ENCODE measurements at regions of chr3 and their contacts with region 1.

Region 1: GRCh38 chr3:136444581-136444980 is 194.4 kb downstream of the PCCB start:
- DNase-seq: no peak
- H3K4me3 ChIP-seq: no peak overlapping the region
- H3K27ac ChIP-seq: no peak overlapping the region
- H3K4me1 ChIP-seq: no peaks in the 10 kb centered on the region
- H3K27me3 ChIP-seq: no peaks in the 10 kb centered on the region
- CTCF ChIP-seq: no peak
- POLR2A ChIP-seq: no peak

Region 2: GRCh38 chr3:136378011-136378410 is 66.6 kb before region 1 on chr3:
- intact Hi-C with region 1: loop called (anchors 2 kb)
- DNase-seq: no peak
- H3K4me3 ChIP-seq: no peak overlapping the region
- H3K27ac ChIP-seq: no peak overlapping the region
- H3K4me1 ChIP-seq: no peaks in the 10 kb centered on the region
- H3K27me3 ChIP-seq: no peaks in the 10 kb centered on the region
- CTCF ChIP-seq: no peak
- POLR2A ChIP-seq: no peak

Region 3: DNA sequence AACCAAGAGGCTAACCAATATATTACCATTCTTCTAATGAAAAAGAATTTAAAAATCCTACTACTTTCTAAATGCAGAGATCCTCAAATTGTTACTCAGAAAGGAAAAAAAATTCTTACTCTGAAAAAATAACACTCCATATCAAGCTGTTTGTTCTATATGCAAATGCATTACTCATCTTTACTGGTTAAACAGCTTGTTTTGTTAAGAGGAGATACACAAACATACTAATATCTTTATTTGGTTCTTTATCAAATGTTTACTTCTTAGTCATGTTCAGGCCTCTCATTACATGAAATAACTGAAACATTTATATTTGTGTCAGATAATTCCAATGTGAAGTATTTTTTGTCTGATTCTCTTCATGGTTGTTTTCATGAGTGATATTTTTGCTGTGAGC is 47.7 kb before region 1 on chr3:
- intact Hi-C with region 1: no loop called
- DNase-seq: no peak
- H3K4me3 ChIP-seq: no peak overlapping the region
- H3K27ac ChIP-seq: no peak overlapping the region
- H3K4me1 ChIP-seq: no peaks in the 10 kb centered on the region
- H3K27me3 ChIP-seq: no peaks in the 10 kb centered on the region
- CTCF ChIP-seq: no peak
- POLR2A ChIP-seq: no peak

Measured in breast epithelium (tissue), 4 donors.